ENCODE measurements at regions of chr4 and their contacts with region 1.

Region 1: GRCh38 chr4:121370729-121371325 is 10.0 kb downstream of the QRFPR start:
- DNase-seq: no peak
- ATAC-seq: no peak

Region 2: DNA sequence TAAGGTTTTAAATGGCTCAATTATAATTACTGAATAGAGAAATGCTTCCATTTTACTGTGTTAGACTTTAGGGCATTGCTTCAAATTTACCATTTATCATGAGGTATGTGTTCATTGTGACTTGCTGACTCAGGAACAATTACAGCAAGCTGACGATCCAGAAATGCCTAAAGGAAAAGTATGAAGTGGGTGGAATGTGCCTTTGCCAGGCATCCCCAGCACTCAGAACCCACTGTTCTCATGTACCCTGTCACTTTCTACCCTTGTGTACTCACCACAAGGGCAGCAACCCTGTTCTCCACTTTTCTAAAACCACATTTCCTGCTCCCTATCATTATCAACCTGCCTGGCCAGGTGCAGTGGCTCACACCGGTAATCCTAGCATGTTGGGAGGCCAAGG is 31.5 kb before region 1 on chr4:
- intact Hi-C with region 1: no loop called
- DNase-seq: no peak
- ATAC-seq: no peak

Region 3: DNA sequence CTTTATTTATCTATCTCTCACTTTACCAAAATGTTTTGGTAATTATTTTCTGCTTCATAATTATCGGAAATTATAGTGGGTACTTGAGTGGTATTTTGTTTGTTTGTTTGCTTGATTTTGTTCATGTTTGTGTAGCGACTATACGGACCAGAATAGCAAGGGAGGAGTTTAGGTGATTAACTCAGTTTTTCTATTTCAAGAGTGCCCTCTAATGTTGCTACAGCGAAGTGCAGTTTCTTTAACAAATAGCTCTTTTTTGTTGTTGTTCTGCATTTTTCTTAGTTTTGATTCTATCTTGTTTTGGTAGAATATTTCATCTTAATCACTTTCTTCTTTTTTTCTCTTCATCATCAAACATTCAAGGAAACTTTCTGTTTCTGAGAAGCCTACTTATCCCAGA is 50.8 kb after region 1 on chr4:
- intact Hi-C with region 1: loop called (anchors 1 kb)
- DNase-seq: no peak
- ATAC-seq: no peak

Region 4: GRCh38 chr4:121472937-121473721 is 102.3 kb after region 1 on chr4:
- intact Hi-C with region 1: no loop called
- DNase-seq: no peak
- ATAC-seq: no peak

Region 5: GRCh38 chr4:121633653-121634052 is 262.8 kb after region 1 on chr4:
- intact Hi-C with region 1: no loop called
- DNase-seq: no peak
- ATAC-seq: no peak

Region 6: GRCh38 chr4:121736735-121737351 is 366.0 kb after region 1 on chr4:
- intact Hi-C with region 1: loop called (anchors 5 kb)
- DNase-seq: no peak
- ATAC-seq: no peak